Activated CD8-positive, alpha-beta memory T cell treated with anti-CD3 and anti-CD28 coated beads, Interleukin-2, amount 10 ng/mL, durations not matched to agents 7 days and 5 days (primary cell): ENCODE measurements at regions of chr2 and their contacts with region 1.

Region 1: DNA sequence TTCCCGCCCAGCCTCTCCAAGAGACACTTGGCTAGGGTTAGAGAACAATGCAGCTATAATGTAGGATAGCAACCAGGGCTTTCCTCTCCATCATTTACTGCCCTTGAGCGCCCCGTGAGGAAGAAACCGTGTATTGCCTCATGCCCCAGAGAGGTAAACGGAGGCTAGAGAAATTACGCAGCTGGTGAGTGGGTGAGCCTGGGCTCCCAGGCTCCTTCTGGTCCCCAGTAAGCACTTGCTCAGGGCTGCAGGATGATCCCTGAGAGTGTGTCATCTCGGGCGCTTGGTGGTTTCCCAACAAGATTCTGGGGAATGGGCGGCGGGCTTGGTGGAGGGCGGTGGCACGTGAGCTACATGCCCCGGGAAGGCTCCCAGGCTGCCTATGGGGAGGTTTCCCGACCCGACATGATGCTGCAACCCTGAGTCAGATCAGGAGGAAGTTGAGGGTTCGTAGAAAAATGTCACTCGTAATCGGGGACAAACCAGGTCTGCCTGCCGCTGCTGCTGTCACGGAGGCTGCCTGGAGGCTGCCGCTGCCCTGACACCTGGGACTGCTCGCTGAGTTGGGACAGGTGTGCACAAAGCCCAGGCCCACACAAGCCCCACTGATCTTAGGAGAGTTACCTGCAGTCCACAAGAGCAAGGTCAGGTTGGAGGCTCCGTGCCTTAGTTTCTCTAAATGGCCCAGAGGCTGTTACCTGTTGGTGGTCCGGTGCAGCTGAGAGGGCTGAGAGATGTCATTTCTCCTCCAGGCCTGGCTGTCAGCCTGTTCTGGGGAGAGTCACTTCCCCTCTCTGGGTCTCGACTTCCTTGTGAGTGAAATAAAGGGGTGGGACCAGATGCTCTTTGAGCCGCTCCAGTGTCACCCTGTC is at the start of gene GPR55:
- DNase-seq: peak; percentile 86
- ATAC-seq: peak; percentile 54
- H3K4me3 Mint-ChIP-seq: peak within 1 kb of the TSS; percentile 83
- H3K27ac Mint-ChIP-seq: peak within 1 kb of the TSS; percentile 96
- H3K4me1 Mint-ChIP-seq: peaks cover 59% of the 10 kb centered on the region
- H3K27me3 Mint-ChIP-seq: peaks cover 10% of the 10 kb centered on the region
- total RNA-seq, gene GPR55: 42.1 to 58.8 TPM

Region 2: DNA sequence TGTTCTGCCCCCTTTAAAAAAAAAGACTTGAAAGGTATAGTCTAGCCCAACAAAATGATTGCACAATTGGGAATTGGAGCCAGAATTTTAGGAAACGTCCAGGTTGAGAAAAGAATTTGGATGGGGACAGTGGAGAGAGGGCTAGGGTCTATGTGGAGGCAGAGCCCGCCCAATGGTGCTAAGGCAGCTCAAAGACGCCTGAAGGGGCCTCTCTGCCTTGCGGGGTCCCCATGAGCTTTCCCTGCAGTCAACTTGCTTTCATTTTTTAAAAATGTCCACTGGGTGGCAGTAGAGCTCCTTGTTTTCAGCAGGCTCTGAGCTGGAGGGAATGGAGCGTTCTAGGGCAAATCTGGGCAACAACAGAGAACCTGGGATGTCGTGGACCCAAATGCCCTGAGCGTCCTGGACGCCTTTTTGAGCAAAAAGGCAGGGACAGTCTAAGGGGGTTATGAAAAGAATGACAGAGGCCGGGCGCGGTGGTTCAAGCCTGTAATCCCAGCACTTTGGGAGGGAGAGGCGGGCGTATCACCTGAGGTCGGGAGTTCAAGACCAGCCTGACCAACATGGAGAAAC is 100.2 kb before region 1 on chr2:
- CTCF ChIA-PET with region 1: interaction called, 12 read pairs
- DNase-seq: peak; percentile 71
- ATAC-seq: peak; percentile 82
- H3K4me3 Mint-ChIP-seq: peak overlapping the region; percentile 37
- H3K27ac Mint-ChIP-seq: peak overlapping the region; percentile 60
- H3K4me1 Mint-ChIP-seq: peaks cover 11% of the 10 kb centered on the region
- H3K27me3 Mint-ChIP-seq: peaks cover 36% of the 10 kb centered on the region

Region 3: DNA sequence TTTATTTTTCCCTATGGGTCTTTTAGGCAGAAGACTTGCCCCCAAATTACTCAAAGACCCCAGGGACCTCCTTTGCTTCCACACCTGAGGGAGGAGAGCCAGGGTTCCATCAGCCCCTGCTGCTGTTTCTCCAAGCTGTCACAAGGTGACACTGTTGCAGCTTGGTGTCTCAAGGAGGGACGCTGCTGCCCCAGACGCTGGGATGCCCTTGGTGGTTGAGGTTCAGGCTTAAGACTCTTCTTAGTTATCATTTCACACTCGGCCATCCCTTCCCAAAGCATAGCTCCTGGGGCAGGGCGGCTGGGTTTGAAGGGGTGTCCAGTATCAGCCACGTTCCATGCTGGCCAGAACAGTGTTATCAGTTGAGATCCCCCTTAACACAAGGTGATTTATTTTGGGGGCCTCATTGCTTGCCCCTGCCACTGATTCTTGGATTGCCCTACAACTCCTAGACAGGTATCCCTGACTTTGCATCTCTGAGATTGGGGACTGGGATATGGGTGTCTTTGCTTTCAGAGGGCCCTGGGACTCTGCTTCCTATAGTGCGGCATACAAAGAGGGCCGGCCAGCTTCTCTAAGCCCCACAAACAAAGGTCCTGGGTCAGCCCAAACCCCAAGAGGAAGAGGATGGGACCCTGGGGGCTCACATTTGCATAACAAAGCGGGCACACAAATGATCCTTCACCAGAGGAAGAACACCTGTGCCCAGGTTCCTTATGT is 22.4 kb before region 1 on chr2:
- CTCF ChIA-PET with region 1: interaction called, 30 read pairs
- DNase-seq: peak; percentile 76
- ATAC-seq: peak; percentile 64
- H3K4me3 Mint-ChIP-seq: no peak overlapping the region
- H3K27ac Mint-ChIP-seq: no peak overlapping the region
- H3K4me1 Mint-ChIP-seq: peaks cover 59% of the 10 kb centered on the region
- H3K27me3 Mint-ChIP-seq: peaks cover 23% of the 10 kb centered on the region

Region 4: DNA sequence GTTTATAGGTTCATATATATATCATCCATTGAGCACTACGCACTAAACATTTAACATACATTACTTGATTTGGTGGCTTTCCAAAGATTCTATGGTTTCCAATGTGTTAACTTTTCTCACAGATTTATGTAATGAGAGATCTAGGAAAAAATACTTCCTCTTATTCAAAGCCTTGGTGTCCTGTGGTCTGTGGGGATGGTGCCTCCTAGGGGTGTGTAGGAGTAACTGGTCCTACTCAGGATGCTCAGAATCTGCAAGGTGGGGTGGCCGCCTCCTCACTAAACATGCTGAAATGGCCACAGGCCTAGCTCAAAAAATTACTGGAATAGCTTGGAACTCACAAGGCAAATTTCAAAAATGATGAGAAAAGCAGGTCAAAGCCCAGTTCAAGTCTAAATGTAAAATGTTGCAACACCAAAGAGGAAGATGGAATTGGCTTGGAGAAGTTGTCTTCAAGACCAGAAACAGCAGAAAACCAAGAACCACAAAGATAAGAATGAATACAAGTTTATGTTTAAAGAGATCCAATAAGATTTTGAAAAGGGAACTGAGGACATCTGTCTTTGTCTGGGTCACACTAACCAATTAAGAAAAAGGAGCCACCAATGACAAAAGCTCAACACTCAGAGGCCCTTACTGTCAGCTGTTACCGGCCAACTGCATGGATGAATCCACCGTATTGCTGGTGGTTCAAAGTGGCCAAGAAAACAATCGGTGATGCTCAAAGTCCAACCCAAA is 11.1 kb before region 1 on chr2:
- CTCF ChIA-PET with region 1: interaction called, 11 read pairs
- DNase-seq: peak; percentile 39
- ATAC-seq: no peak
- H3K4me3 Mint-ChIP-seq: no peak overlapping the region
- H3K27ac Mint-ChIP-seq: peak overlapping the region; percentile 47
- H3K4me1 Mint-ChIP-seq: peaks cover 66% of the 10 kb centered on the region
- H3K27me3 Mint-ChIP-seq: peaks cover 13% of the 10 kb centered on the region

Region 5: DNA sequence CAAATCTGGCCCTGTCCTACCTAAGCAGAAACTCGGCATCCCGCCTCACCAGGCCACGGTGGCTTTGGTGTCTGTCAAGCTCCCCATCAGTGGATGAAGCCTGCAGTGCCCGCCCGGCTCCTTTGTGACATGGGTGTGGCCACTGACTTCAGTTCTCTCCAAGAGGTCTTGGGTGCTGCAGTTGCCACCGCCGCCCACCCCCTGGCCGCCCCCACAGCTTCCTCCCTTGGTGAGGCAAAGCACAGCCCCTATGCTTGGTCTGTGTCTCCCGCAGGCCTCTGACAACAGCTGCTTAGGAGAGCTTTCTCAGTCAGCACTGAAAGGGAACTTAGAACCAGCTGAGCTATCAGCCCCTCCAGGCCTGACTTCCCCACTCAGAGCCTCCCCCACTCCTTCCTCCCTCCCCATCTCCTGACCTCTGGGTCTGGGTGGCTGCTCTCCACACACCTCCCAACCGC is 23.2 kb after region 1 on chr2:
- CTCF ChIA-PET with region 1: interaction called, 10 read pairs
- DNase-seq: peak; percentile 81
- ATAC-seq: peak; percentile 22
- H3K4me3 Mint-ChIP-seq: peak overlapping the region; percentile 79
- H3K27ac Mint-ChIP-seq: peak overlapping the region; percentile 89
- H3K4me1 Mint-ChIP-seq: peaks cover 84% of the 10 kb centered on the region
- H3K27me3 Mint-ChIP-seq: peaks cover 31% of the 10 kb centered on the region

Region 6: DNA sequence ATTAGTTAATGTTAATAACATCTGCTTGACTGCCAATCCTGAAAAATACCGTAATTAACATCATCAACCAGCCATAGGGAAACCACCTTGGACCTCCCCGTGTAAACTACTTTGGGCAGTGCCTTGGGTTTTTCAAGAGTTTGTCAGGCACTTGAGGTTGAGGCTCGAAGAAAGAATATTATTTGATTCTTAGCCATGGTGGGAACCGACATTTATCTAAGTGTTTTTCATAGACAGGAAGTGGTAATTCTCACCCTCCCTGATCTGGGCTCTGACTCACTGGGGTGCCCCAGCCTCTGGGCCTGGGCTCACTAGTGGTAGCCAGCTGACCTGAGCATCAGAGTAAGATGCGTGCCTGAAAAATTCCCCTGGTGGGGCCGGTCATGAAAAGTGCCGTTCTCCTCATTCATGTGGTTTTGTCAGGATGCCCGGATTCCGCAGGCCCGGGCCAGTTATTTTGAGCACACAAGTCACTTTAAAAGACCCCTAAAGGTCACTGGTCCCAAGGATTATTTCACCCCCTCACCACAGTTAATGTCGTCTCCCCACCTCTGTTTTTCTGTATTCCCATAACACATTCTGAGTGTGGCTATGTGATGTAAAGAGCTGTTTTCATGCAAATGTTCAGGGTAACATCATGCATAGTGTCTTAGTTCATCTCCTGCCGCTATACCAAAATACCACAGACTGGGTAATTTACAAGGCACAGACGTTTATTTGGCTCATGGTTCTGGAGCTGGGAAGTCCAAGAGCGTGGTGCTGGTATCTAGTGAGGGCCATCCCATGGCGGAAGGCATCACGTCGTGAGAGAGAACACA is 49.6 kb after region 1 on chr2:
- CTCF ChIA-PET with region 1: interaction called, 13 read pairs
- DNase-seq: peak; percentile 88
- ATAC-seq: peak; percentile 89
- H3K4me3 Mint-ChIP-seq: peak overlapping the region; percentile 39
- H3K27ac Mint-ChIP-seq: peak overlapping the region; percentile 88
- H3K4me1 Mint-ChIP-seq: peaks cover 76% of the 10 kb centered on the region
- H3K27me3 Mint-ChIP-seq: peaks cover 38% of the 10 kb centered on the region

Region 7: GRCh38 chr2:231094736-231095346 is 170.1 kb after region 1 on chr2:
- CTCF ChIA-PET with region 1: no interaction called
- DNase-seq: no peak
- ATAC-seq: no peak
- H3K4me3 Mint-ChIP-seq: no peak overlapping the region
- H3K27ac Mint-ChIP-seq: no peak overlapping the region
- H3K4me1 Mint-ChIP-seq: no peaks in the 10 kb centered on the region
- H3K27me3 Mint-ChIP-seq: no peaks in the 10 kb centered on the region